ENCODE measurements at regions of chr10 and their contacts with region 1.

Region 1: DNA sequence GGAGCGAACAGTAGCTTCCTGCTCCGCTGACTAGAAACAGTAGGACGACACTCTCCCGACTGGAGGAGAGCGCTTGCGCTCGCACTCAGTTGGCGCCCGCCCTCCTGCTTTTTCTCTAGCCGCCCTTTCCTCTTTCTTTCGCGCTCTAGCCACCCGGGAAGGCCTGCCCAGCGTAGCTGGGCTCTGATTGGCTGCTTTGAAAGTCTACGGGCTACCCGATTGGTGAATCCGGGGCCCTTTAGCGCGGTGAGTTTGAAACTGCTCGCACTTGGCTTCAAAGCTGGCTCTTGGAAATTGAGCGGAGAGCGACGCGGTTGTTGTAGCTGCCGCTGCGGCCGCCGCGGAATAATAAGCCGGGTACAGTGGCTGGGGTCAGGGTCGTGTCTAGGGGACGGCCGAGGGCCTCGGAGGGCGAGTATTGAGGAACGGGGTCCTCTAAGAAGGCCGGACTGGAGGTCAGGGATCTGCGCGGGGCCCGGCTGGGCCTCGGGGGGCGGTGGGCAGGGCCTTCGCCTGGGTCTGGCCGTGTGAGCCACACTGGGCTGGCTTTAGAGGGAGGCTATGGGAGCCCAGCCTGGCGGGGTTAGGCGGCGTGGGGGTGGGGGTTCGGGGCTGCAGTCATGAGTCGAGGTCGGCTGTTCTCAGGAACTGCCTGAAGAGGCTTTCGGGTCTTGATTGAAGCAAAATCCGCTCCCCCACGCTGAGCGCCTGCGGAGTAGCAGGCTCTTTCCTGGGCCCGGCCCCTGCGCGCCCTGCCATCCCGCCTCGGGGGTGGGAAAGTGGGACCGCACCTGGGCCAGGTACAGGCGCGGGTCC is at the start of gene CDK1:
- DNase-seq: peak; percentile 97 to 99
- H3K4me3 ChIP-seq: peak within 1 kb of the TSS; percentile 91
- H3K27ac ChIP-seq: peak within 1 kb of the TSS; percentile 52; the same call in 1 of the 2 replicates
- H3K4me1 ChIP-seq: peaks cover 32% of the 10 kb centered on the region
- H3K27me3 ChIP-seq: no peaks in the 10 kb centered on the region
- CTCF ChIP-seq: no peak
- total RNA-seq, gene CDK1: 94.4 and 137 TPM in 2 replicates

Region 2: DNA sequence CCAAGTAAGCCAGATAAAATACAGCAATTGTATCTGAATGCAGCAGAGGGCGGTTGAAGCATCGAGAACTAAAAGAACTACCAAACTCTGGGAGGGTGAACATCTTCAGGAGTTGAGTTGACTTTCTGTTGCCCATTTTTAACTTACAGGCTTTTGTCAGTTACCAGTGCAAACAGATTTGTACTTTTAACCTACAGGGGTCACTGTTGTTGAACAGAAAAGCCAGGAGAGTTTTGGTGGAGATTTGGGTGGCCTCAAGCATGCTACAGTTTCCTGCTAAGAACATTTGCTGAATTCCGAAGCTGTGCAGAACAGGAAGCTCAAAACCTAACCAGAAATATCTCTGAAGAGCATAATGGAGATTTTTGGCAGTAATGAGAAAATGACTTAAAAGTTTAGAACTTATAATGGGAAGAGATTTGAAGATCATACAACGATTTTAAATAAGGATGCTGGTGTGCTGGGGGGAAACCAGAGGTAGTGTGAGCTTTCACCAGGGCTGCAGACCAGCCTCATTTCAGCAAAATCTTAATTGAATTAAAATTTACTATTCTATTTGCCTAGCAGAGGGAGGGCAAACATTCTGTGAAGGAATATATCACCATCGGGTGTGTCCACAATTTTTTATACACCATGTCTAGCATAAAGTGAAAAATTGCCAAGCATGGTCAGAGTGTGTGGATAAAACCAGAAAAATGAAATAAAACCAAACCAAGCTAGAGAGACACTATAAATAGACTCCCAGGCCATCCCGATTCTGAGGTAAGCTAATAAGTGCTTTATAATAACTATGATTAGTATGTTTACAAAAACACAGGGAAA is 663.4 kb before region 1 on chr10:
- CTCF ChIA-PET with region 1: no interaction called
- POLR2A ChIA-PET with region 1: no interaction called
- intact Hi-C with region 1: loop called (anchors 10 kb)
- DNase-seq: peak in 1 of 2 experiments; percentile 16
- H3K4me3 ChIP-seq: no peak overlapping the region
- H3K27ac ChIP-seq: no peak overlapping the region
- H3K4me1 ChIP-seq: no peaks in the 10 kb centered on the region
- H3K27me3 ChIP-seq: no peaks in the 10 kb centered on the region
- CTCF ChIP-seq: peak; percentile 76

Region 3: GRCh38 chr10:60237977-60238758 is 540.3 kb before region 1 on chr10:
- CTCF ChIA-PET with region 1: no interaction called
- POLR2A ChIA-PET with region 1: no interaction called
- intact Hi-C with region 1: loop called (anchors 10 kb)
- DNase-seq: peak in 1 of 2 experiments; percentile 34
- H3K4me3 ChIP-seq: no peak overlapping the region
- H3K27ac ChIP-seq: no peak overlapping the region
- H3K4me1 ChIP-seq: no peaks in the 10 kb centered on the region
- H3K27me3 ChIP-seq: no peaks in the 10 kb centered on the region
- CTCF ChIP-seq: peak; percentile 53

Region 4: DNA sequence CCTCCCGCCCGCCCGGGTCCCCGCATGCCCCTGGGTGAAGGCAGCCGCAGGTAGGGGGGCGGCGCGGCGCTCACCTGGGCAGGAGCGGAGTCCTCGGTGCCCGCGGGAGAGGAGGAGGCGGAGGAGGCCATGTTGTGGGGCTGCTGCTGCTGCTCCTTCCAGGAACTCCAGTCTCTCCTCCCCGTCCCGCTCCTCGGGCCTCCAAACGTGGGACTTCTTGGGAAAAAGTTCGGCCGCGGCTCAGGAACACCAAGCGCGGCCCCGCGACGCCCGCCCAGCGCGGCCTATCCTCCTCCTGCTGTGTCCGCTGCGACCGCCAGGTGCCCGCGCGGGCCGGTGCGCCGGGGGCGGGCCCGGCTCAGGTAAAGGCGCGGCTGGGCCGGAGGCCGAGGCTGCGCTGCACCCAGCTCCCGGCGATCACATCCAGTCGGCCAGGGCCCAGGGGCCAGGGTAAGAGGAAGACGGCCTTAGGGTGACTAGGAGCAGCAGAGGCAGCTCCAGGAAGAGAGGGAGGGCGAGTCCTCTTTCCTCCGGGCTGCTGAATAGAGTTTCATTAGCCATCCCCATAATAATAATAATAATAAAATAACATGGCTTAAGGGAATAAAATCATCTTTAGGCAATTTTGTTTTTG is 45.1 kb before region 1 on chr10:
- CTCF ChIA-PET with region 1: no interaction called
- POLR2A ChIA-PET with region 1: interaction called, 3 read pairs
- intact Hi-C with region 1: loop called (anchors 2 kb)
- DNase-seq: peak; percentile 60 to 80
- H3K4me3 ChIP-seq: peak overlapping the region; percentile 70
- H3K27ac ChIP-seq: no peak overlapping the region
- H3K4me1 ChIP-seq: peaks cover 39% of the 10 kb centered on the region
- H3K27me3 ChIP-seq: no peaks in the 10 kb centered on the region
- CTCF ChIP-seq: peak; percentile 61; the same call in 1 of the 2 replicates

Region 5: GRCh38 chr10:60757420-60757895 is 21.0 kb before region 1 on chr10:
- CTCF ChIA-PET with region 1: no interaction called
- POLR2A ChIA-PET with region 1: no interaction called
- intact Hi-C with region 1: no loop called
- DNase-seq: no peak
- H3K4me3 ChIP-seq: no peak overlapping the region
- H3K27ac ChIP-seq: no peak overlapping the region
- H3K4me1 ChIP-seq: no peaks in the 10 kb centered on the region
- H3K27me3 ChIP-seq: no peaks in the 10 kb centered on the region
- CTCF ChIP-seq: no peak

Region 6: GRCh38 chr10:60978287-60979115 is 200.1 kb after region 1 on chr10:
- CTCF ChIA-PET with region 1: no interaction called
- POLR2A ChIA-PET with region 1: no interaction called
- intact Hi-C with region 1: no loop called
- DNase-seq: peak; percentile 27 to 88
- H3K4me3 ChIP-seq: no peak overlapping the region
- H3K27ac ChIP-seq: peak overlapping the region; percentile 7; the same call in 1 of the 2 replicates
- H3K4me1 ChIP-seq: peaks cover 43% of the 10 kb centered on the region
- H3K27me3 ChIP-seq: no peaks in the 10 kb centered on the region
- CTCF ChIP-seq: no peak